ENCODE measurements at regions of chr9 and their contacts with region 1.

Region 1: GRCh38 chr9:115127191-115127817 is 9.3 kb upstream of the TNC start:
- DNase-seq: no peak
- H3K4me3 ChIP-seq: no peak overlapping the region
- CTCF ChIP-seq: no peak

Region 2: GRCh38 chr9:115164511-115164974 is 37.2 kb after region 1 on chr9:
- in situ Hi-C with region 1: loop called (anchors 5 kb)
- DNase-seq: no peak
- H3K4me3 ChIP-seq: no peak overlapping the region
- CTCF ChIP-seq: no peak

Region 3: DNA sequence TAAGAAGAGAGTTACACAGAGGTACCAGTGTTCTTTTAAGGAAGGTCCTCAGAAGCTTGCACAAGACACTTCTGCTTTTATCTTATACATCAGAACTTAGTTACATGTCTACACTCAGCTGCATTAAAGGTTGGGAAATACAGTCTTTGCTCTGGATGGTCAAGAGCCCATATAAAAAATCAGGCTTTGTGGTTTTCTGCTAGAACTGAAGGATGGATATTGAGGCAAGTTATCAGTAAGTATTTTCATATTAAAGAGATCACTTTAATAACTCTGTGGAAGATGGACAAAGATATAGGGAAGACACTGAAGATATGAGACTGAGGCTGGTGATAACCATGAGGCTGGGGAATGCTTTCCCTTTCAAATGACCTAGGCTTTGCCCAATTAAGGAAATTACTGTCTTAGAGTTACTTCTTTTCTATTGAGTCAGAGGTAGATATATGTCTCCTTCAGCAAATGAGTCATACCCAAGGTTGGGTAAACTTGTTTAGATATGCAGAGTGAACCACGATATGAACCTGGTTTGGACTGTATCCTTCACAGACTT is 77.7 kb after region 1 on chr9:
- in situ Hi-C with region 1: no loop called
- DNase-seq: peak; percentile 48
- H3K4me3 ChIP-seq: no peak overlapping the region
- CTCF ChIP-seq: no peak